Esophagus muscularis mucosa (tissue), 4 donors: ENCODE measurements at regions of chr16 and their contacts with region 1.

Region 1: DNA sequence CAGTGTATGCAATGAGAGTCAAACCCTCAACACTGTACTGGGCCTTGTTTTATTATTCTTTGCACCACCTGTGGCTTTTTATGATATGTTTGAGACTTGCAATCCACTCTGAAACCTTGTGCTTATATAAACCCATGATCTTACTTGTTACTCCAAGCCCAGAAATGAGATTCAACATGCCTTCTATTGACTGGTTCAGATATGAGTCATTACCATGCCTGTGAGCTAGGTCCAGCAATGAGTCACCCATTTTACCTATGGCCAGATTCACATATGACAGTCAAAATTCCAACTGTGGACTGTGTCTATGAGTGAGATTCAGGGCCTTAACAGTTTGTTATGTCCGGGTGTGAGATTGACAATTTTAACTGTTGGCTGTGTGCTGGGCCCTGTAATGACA is 1846.1 kb downstream of the TP53TG3F start:
- DNase-seq: peak; percentile 70
- H3K4me3 ChIP-seq: no peak overlapping the region
- H3K27ac ChIP-seq: no peak overlapping the region
- H3K4me1 ChIP-seq: no peaks in the 10 kb centered on the region
- H3K27me3 ChIP-seq: no peaks in the 10 kb centered on the region
- CTCF ChIP-seq: no peak
- EP300 ChIP-seq: no peak
- POLR2A ChIP-seq: no peak

Region 2: GRCh38 chr16:35182943-35183550 is 122.4 kb before region 1 on chr16:
- intact Hi-C with region 1: no loop called
- DNase-seq: peak; percentile 82
- H3K4me3 ChIP-seq: no peak overlapping the region
- H3K27ac ChIP-seq: no peak overlapping the region
- H3K4me1 ChIP-seq: no peaks in the 10 kb centered on the region
- H3K27me3 ChIP-seq: peaks cover 0 to 23% (median 0%) of the 10 kb centered on the region in 4 donors
- CTCF ChIP-seq: no peak
- EP300 ChIP-seq: no peak
- POLR2A ChIP-seq: no peak

Region 3: DNA sequence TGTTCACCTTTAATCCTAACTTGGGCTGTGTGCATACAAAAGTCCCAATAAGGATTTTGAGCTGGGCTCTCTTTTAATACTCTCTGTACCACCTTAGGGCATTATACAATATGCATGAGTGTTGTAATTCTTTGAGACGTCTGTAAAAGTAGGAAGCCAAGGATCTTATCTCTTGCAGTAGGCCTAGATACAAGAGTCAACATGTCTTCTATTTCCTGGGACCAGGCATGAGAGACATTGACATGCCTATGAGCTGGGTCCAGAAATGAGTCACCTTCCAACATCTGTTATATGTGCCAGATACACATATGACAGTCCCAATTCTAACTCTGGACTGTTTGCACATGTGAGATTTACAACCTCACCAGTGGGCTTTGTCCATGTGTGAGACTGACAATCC is 65.1 kb after region 1 on chr16:
- intact Hi-C with region 1: loop called (anchors 10 kb)
- DNase-seq: no peak
- H3K4me3 ChIP-seq: no peak overlapping the region
- H3K27ac ChIP-seq: no peak overlapping the region
- H3K4me1 ChIP-seq: no peaks in the 10 kb centered on the region
- H3K27me3 ChIP-seq: no peaks in the 10 kb centered on the region
- CTCF ChIP-seq: no peak
- EP300 ChIP-seq: no peak
- POLR2A ChIP-seq: no peak